CD14-positive monocyte (primary cell): ENCODE measurements at regions of chr10 and their contacts with region 1.

Region 1: GRCh38 chr10:71378336-71379117 is 18.2 kb upstream of the CDH23 start:
- DNase-seq: peak; percentile 54 to 80 (median 76)
- H3K4me3 ChIP-seq: peak overlapping the region in 1 of 3 experiments; percentile 78
- H3K4me3 Mint-ChIP-seq: peak overlapping the region; percentile 52 to 65
- H3K27ac ChIP-seq: peak overlapping the region; percentile 74 to 89
- H3K27ac Mint-ChIP-seq: peak overlapping the region; percentile 78 to 94 (median 92)
- H3K4me1 ChIP-seq: peaks cover 75 to 78% of the 10 kb centered on the region in 2 donors
- H3K4me1 Mint-ChIP-seq: peaks cover 64% of the 10 kb centered on the region
- H3K27me3 ChIP-seq: no peaks in the 10 kb centered on the region
- H3K27me3 Mint-ChIP-seq: peaks cover 0 to 2% (median 2%) of the 10 kb centered on the region in 3 donors
- CTCF ChIP-seq: no peak

Region 2: DNA sequence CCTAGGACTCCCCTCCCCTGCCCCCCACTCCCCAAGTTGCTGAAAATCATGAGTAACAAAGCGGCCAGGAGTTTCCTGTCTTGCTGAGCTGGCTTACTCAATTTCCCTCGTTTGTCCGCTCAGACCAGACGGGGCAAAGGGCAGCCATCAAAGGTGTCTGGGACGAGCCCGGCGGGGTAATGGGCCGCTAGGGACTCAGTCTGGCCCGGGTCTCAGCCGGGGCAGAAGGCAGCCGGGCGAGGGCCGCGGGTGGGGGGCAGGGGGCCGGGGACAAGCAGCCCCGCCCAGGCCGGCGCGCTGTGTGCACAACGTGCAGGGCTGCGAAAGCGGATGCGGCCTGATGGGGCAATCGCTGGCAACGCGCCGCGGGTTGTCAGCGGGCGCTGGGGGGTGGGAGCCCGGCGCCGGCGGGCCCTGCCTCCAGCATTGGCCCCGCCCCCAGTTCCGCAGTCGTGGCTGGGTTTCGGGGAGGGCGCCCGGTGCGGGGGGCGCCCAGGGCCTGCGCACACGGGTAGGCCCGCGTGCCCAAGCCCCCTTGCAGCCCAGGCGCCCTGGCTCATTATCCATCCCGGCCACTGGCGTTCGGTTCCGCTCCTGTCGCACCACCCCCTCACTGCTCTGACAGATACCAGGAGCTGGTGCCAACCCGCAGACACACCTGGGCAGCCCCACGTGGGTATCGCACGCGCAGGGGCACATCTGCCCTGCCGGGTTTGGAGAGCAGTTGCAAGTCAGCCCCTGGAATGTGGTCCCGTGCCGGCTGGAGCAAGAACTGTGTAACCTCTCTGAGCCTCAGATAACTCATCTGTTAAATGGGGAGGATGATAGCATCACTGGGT is 941.1 kb after region 1 on chr10:
- intact Hi-C with region 1: loop called in 1 of 2 experiments (anchors 5 kb)
- DNase-seq: peak; percentile 93 to 96 (median 94)
- H3K4me3 ChIP-seq: peak overlapping the region; percentile 37 to 73 (median 47)
- H3K4me3 Mint-ChIP-seq: peak overlapping the region; percentile 73 to 79
- H3K27ac ChIP-seq: peak overlapping the region; percentile 98 to 100
- H3K27ac Mint-ChIP-seq: peak overlapping the region; percentile 97 to 100 (median 99)
- H3K4me1 ChIP-seq: peaks cover 89 to 99% of the 10 kb centered on the region in 2 donors
- H3K4me1 Mint-ChIP-seq: peaks cover 89% of the 10 kb centered on the region
- H3K27me3 ChIP-seq: no peaks in the 10 kb centered on the region
- H3K27me3 Mint-ChIP-seq: no peaks in the 10 kb centered on the region
- CTCF ChIP-seq: no peak